Cardiac septum (tissue), 1 donor: ENCODE measurements at regions of chr1 and their contacts with region 1.

Region 1: GRCh38 chr1:2314803-2315673 is 76.3 kb downstream of the MORN1 start:
- DNase-seq: no peak

Region 2: DNA sequence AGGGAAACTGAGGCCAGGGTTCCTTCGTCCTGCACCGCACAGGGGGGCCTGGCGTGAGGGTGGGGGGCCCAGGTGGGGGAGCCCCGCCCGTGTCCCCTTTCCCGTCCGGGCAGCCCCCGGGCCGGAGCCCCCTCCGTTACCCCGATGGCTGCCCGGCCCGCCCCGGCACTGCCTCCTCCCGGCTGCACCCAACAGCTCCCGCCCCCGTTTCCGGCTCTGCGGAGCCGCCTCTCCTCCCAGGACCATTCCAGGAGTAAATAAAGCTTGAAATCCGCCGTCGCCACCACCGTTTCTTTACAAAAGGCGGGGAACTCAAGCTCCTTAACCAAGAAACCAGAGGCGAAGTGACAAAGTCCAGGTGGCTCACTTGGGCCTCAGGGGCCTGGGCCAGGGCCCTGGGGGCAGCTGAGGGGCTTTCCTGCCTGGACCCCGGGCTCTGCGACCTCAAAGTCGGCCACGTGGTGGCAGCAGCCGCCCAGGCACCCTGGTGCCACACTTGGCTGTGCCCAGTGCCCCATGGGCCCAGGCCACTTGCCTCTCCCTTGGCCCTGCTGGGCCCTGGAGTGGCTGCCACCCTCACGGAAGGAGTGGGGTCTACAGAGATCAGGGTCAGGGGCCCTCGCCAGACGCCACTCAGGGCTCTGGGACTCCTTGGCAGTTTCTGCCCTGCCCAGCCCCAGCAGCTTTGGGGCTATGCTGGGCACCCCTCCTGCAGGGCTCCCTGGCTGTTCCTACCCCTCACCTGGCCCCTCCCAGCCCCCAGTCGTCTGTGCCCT is 120.0 kb before region 1 on chr1:
- intact Hi-C with region 1: loop called (anchors 2 kb)
- DNase-seq: peak; percentile 95

Region 3: GRCh38 chr1:2227346-2228153 is 87.5 kb before region 1 on chr1:
- intact Hi-C with region 1: loop called (anchors 2 kb)
- DNase-seq: peak; percentile 98

Region 4: DNA sequence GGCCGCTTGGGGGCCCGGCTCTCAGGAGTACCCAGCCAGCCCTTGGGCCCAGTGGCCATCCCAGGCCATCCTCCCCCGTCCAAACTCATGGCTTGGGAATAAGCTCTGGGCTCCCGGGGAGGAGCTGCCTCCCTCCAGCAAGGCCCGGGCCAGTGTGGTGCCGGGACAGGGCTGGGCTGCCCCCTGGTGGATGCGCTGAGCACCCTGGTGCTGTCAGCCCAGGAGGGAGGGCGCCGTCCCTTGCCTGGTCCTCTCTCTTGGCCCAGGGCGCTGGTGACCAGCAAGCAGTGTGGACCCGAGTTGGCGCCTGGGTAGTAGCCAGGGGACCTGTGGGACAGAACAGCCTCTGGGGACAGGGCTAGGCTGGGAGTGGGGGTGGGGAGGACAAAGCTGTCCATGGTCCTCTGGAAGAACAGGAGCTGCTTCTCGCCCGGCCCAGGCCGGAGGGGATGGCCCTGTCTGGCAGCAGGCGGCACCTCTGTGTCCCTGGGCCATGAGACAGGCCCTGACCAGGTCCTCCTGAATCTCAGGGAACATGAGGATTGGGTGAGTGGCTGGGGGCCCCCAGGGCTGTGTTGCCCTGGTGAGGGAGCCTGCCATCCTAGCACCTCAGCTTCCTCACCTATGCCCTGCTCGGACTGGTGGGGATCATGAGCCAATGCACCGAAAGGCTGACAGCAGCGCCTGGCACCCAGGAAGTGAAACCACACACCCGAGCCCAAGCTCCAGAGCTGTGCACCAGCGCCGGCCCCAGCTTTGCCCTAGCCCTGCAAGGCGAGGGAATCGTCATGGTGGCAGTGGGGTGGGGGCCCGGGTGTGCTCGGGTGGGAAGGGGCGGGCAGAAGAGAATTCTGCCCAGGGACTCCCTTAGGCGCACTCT is 66.9 kb after region 1 on chr1:
- intact Hi-C with region 1: loop called (anchors 10 kb)
- DNase-seq: peak; percentile 93

Region 5: GRCh38 chr1:2525920-2526823 is 211.1 kb after region 1 on chr1 and contains the start of gene PANK4:
- intact Hi-C with region 1: loop called (anchors 10 kb)
- DNase-seq: peak; percentile 95
- total RNA-seq, gene PANK4: 37.1 TPM